IMR-90 (cell line): ENCODE measurements at regions of chr2 and their contacts with region 1.

Region 1: DNA sequence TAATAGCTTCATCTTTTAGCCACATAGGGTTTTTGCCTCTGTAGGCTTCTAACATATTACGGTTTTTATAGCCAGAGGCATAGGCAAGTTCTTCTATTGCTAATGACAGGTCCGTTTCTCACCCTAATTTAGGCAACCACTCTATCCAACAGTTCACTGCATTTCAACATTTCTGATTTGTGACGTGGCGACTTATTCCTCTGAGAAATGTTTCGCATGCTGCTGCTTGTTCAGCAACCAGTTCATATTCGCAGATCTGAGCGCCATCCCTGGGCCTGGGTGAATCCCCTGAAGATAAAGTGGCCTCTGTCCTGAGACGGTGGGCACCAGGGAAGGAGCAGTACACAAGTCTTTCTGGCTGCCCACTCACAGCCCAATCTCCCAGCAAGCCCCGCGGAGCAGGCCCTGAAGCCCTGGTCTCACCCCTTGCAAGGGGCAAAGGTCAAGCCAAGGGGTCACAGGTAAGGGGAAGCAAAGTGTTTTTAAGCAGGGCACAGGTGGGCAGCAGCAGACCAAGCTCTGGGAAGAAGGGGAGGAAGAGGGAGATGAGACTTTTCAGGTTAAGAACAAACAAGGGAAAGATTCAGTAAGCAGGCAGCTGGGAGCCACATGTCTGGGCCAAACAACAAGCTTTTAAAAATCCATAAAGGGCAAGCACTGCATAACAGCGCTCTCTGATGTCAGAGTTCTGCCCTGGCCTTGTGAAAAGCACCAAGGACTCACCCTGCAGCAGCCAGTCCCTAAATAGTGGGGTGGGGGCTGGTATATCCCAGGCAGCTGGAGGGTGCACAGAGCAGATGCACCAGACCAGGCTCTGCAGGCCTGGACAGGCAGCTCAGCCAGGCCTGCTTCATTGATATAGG is 10.8 kb upstream of the COX7A2L start:
- DNase-seq: no peak
- ATAC-seq: peak; percentile 42
- H3K4me3 ChIP-seq: no peak overlapping the region
- H3K27ac ChIP-seq: no peak overlapping the region
- H3K4me1 ChIP-seq: no peaks in the 10 kb centered on the region
- H3K27me3 ChIP-seq: peaks cover 29% of the 10 kb centered on the region
- CTCF ChIP-seq: no peak
- POLR2A ChIP-seq: no peak
- RAD21 ChIP-seq: no peak

Region 2: DNA sequence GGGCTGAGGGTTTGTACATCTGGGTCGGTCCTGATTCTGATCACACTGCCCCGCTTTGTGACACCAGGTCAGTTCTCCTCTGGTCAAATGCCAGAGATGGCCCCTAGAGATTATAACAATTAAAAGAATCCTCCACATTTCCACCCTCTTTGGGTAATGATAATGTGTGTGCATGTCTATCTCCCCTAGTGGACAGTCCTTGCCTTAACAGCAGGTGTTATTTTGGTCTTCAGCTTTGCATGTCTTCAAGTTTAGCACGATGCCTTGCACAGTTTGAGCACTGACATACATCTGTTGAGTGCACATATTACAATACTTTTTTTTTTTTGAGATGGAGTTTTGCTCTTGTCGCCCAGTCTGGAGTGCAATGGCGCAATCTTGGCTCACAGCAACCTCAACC is 14.8 kb after region 1 on chr2:
- CTCF ChIA-PET with region 1: no interaction called
- POLR2A ChIA-PET with region 1: no interaction called
- dilution Hi-C with region 1: no loop called
- in situ Hi-C with region 1: no loop called
- intact Hi-C with region 1: loop called (anchors 1 kb)
- DNase-seq: no peak
- ATAC-seq: no peak
- H3K4me3 ChIP-seq: no peak overlapping the region
- H3K27ac ChIP-seq: no peak overlapping the region
- H3K4me1 ChIP-seq: no peaks in the 10 kb centered on the region
- H3K27me3 ChIP-seq: peaks cover 17% of the 10 kb centered on the region
- CTCF ChIP-seq: peak; percentile 26; the same call in 1 of the 2 replicates
- POLR2A ChIP-seq: no peak
- RAD21 ChIP-seq: no peak